Activated naive CD4-positive, alpha-beta T cell treated with anti-CD3 and anti-CD28 coated beads for 36 hours (primary cell): ENCODE measurements at regions of chr1 and their contacts with region 1.

Region 1: GRCh38 chr1:168136709-168137514 is at the start of gene GPR161:
- DNase-seq: peak; percentile 37
- H3K4me3 Mint-ChIP-seq: peak within 1 kb of the TSS; percentile 75
- H3K27ac Mint-ChIP-seq: no peak within 1 kb of the TSS
- H3K4me1 Mint-ChIP-seq: peaks cover 39% of the 10 kb centered on the region
- H3K27me3 Mint-ChIP-seq: peaks cover 26% of the 10 kb centered on the region
- total RNA-seq, gene GPR161: 0.12 to 0.29 TPM

Region 2: GRCh38 chr1:167715157-167715999 is 421.5 kb before region 1 on chr1:
- CTCF ChIA-PET with region 1: no interaction called
- intact Hi-C with region 1: loop called (anchors 5 kb)
- DNase-seq: peak; percentile 95
- H3K4me3 Mint-ChIP-seq: peak overlapping the region; percentile 79
- H3K27ac Mint-ChIP-seq: peak overlapping the region; percentile 92
- H3K4me1 Mint-ChIP-seq: peaks cover 28% of the 10 kb centered on the region
- H3K27me3 Mint-ChIP-seq: peaks cover 5% of the 10 kb centered on the region

Region 3: GRCh38 chr1:168112673-168113305 is 24.1 kb before region 1 on chr1:
- CTCF ChIA-PET with region 1: no interaction called
- intact Hi-C with region 1: loop called (anchors 1 kb)
- DNase-seq: peak; percentile 88
- H3K4me3 Mint-ChIP-seq: no peak overlapping the region
- H3K27ac Mint-ChIP-seq: no peak overlapping the region
- H3K4me1 Mint-ChIP-seq: peaks cover 11% of the 10 kb centered on the region
- H3K27me3 Mint-ChIP-seq: no peaks in the 10 kb centered on the region

Region 4: DNA sequence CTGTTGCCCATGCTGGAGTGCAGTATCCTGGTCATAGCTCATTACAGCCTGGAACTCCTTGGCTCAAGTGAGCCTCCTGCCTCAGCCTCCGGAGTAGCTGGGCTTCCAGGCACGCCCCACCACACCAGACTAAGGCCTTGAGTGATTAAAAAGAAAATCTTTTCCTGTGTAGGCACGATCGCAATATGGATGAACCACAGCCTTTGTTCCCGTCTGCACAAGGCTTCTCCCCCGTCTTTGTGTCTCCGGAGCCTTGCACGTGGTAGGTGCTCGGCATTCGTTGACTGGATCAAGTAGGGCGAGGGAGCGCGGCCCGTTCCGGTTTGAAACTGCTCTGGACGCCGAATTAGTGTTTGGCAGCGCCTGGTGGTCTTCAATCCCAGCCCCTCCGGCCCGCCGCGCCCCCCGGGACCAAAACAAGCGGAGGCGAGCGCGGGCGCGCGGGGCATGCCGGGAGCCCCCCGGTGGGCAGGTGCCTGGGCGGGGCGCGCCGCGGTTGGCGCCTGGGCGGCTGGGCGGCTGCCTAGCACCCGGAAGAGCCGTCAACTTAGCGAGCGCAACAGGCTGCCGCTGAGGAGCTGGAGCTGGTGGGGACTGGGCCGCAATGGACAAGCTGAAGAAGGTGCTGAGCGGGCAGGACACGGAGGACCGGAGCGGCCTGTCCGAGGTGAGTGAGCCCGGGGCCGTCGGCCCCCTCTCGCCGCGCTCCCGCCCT is 88.7 kb after region 1 on chr1 and contains the start of gene SFT2D2:
- CTCF ChIA-PET with region 1: no interaction called
- intact Hi-C with region 1: loop called (anchors 2 kb)
- DNase-seq: peak; percentile 77
- H3K4me3 Mint-ChIP-seq: peak within 1 kb of the TSS; percentile 92
- H3K27ac Mint-ChIP-seq: peak within 1 kb of the TSS; percentile 80
- H3K4me1 Mint-ChIP-seq: peaks cover 46% of the 10 kb centered on the region
- H3K27me3 Mint-ChIP-seq: peaks cover 2% of the 10 kb centered on the region
- total RNA-seq, gene SFT2D2: 33.1 to 35.3 TPM

Region 5: DNA sequence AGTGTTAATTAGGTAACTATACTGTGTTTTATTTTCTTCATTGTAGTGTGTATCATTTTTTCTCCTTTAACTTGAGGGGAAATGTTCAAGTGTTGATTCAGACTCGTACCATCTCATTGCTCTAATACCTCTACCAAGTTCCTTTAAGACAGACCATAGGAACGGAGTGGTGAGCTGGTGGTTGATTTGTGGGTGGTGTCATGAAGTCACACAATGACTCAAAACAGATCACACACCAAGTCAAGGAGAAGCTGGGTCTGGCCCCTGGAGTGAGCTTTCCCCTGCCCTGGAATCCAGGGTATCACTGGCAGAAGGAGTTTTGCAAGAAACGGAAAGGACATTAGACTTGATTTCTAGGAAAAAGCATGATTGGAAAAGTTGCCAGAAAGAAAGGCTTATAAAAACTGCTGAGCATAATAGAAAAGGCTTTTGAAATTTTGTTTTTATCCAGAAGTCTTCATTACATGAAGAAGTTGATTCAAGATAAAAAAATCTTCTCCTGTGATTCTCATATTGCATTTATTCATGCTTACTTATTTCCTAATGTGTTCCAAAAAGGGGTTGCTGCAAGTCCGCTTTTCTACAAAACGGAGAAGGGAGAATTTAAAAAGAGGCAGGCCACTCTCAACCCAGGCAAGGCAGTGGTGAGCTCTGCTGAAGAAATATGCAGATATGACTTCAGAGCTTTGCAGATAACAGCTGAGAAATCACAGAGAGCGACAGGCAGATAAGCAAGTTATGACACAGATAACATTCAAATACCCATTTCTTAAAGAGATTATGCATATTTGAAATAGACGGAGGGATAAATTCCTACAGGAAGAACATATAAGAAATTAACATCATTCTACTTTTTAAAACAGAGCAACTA is 223.5 kb after region 1 on chr1:
- CTCF ChIA-PET with region 1: no interaction called
- intact Hi-C with region 1: no loop called
- DNase-seq: no peak
- H3K4me3 Mint-ChIP-seq: no peak overlapping the region
- H3K27ac Mint-ChIP-seq: no peak overlapping the region
- H3K4me1 Mint-ChIP-seq: peaks cover 9% of the 10 kb centered on the region
- H3K27me3 Mint-ChIP-seq: no peaks in the 10 kb centered on the region